GM12878 (cell line): ENCODE measurements at regions of chr5 and their contacts with region 1.

Region 1: DNA sequence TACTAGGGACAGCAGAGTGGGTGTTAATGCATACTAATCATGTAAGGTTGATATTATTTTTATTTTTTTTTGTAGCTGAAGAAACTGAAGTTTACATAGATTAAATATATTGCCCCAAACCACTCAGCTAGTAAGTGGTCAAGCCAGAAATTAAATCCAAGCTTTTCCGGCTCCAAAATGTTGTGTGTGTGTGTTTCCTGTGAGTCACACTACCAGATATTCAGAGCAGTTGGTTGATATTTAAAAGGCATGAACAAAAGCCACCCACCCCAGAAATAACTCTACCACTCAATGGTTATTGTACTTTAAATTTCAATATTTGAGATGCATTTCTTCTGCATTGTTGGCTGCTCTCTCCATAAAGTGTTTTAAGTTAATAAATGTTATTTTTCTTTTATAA is 29.5 kb downstream of the KCNN2 start:
- DNase-seq: no peak
- ATAC-seq: no peak
- H3K4me3 ChIP-seq: no peak overlapping the region
- H3K27ac ChIP-seq: no peak overlapping the region
- H3K4me1 ChIP-seq: no peaks in the 10 kb centered on the region
- H3K27me3 ChIP-seq: no peaks in the 10 kb centered on the region
- CTCF ChIP-seq: no peak
- EP300 ChIP-seq: no peak
- POLR2A ChIP-seq: no peak
- RAD21 ChIP-seq: no peak

Region 2: DNA sequence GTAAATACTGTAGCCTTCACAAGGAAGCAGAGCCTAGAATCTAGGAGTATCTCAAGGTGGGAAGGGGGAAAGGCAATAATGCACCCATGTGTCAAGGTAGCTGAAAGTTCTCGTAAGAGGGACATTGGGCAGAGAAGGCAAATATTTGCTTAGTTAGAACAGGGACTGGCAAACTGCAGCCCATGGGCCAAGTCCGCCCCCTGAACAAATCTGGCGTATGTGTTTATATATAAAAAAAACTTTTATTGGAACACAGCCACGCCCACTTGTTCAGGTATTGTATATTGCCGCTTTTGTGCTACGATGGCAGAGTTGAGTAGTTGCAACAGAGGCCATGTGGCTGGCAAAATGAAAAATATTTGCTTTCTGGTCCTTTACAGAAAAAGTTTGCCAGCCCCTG is 13.4 kb before region 1 on chr5:
- CTCF ChIA-PET with region 1: interaction called, 11 read pairs
- POLR2A ChIA-PET with region 1: interaction called, 5 read pairs
- RAD21 ChIA-PET with region 1: interaction called, 4 read pairs
- SMC1A ChIA-PET with region 1: interaction called, 11 read pairs
- in situ Hi-C with region 1: no loop called
- intact Hi-C with region 1: no loop called
- DNase-seq: no peak
- ATAC-seq: no peak
- H3K4me3 ChIP-seq: no peak overlapping the region
- H3K27ac ChIP-seq: no peak overlapping the region
- H3K4me1 ChIP-seq: no peaks in the 10 kb centered on the region
- H3K27me3 ChIP-seq: no peaks in the 10 kb centered on the region
- CTCF ChIP-seq: no peak
- EP300 ChIP-seq: no peak
- POLR2A ChIP-seq: no peak
- RAD21 ChIP-seq: no peak

Region 3: DNA sequence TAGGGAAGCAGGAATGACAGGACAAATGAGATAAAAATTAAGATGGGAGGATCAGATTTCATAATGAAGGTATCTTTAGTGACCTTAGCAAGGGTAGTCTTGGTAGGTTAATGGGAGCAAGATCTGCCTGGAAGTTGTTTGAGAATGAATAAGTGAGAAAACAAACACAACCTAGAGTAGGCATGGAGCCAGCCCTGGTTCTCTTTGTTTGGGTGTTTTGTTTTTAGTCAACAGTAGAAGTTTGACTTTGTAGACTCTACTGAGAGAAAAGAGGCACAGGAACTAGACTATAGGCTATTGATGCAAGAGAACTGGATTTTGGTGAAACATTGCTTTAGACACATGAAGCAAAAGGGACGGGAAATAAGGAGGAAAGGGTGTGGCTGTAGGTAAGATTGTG is 10.9 kb after region 1 on chr5:
- CTCF ChIA-PET with region 1: interaction called, 3 read pairs
- POLR2A ChIA-PET with region 1: interaction called, 3 read pairs
- RAD21 ChIA-PET with region 1: no interaction called
- SMC1A ChIA-PET with region 1: interaction called, 10 read pairs
- in situ Hi-C with region 1: no loop called
- intact Hi-C with region 1: no loop called
- DNase-seq: no peak
- ATAC-seq: peak; percentile 49
- H3K4me3 ChIP-seq: no peak overlapping the region
- H3K27ac ChIP-seq: no peak overlapping the region
- H3K4me1 ChIP-seq: no peaks in the 10 kb centered on the region
- H3K27me3 ChIP-seq: no peaks in the 10 kb centered on the region
- CTCF ChIP-seq: no peak
- EP300 ChIP-seq: no peak
- POLR2A ChIP-seq: no peak
- RAD21 ChIP-seq: no peak

Region 4: GRCh38 chr5:114407783-114408182 is 16.5 kb after region 1 on chr5:
- CTCF ChIA-PET with region 1: interaction called, 3 read pairs
- POLR2A ChIA-PET with region 1: interaction called, 3 read pairs
- RAD21 ChIA-PET with region 1: interaction called, 3 read pairs
- SMC1A ChIA-PET with region 1: interaction called, 6 read pairs
- in situ Hi-C with region 1: no loop called
- intact Hi-C with region 1: loop called (anchors 2 kb)
- DNase-seq: peak; percentile 34
- ATAC-seq: peak; percentile 60
- H3K4me3 ChIP-seq: no peak overlapping the region
- H3K27ac ChIP-seq: no peak overlapping the region
- H3K4me1 ChIP-seq: no peaks in the 10 kb centered on the region
- H3K27me3 ChIP-seq: no peaks in the 10 kb centered on the region
- CTCF ChIP-seq: no peak
- EP300 ChIP-seq: no peak
- POLR2A ChIP-seq: no peak
- RAD21 ChIP-seq: no peak